OCI-LY7 (cell line): ENCODE measurements at regions of chr14 and their contacts with region 1.

Region 1: GRCh38 chr14:102524466-102525218 is 15.1 kb upstream of the ANKRD9 start:
- DNase-seq: peak; percentile 98
- H3K4me3 ChIP-seq: peak overlapping the region; percentile 67
- H3K27ac ChIP-seq: peak overlapping the region; percentile 47
- H3K4me1 ChIP-seq: peaks cover 18% of the 10 kb centered on the region
- CTCF ChIP-seq: peak; percentile 95

Region 2: GRCh38 chr14:102560458-102561154 is 36.0 kb after region 1 on chr14:
- CTCF ChIA-PET with region 1: interaction called, 3 read pairs
- POLR2A ChIA-PET with region 1: interaction called, 10 read pairs
- intact Hi-C with region 1: loop called (anchors 2 kb)
- DNase-seq: peak; percentile 73
- H3K4me3 ChIP-seq: peak overlapping the region; percentile 2
- H3K27ac ChIP-seq: peak overlapping the region; percentile 32
- H3K4me1 ChIP-seq: peaks cover 19% of the 10 kb centered on the region
- CTCF ChIP-seq: no peak

Region 3: GRCh38 chr14:102694530-102695166 is 170.0 kb after region 1 on chr14:
- CTCF ChIA-PET with region 1: no interaction called
- POLR2A ChIA-PET with region 1: interaction called, 3 read pairs
- intact Hi-C with region 1: loop called (anchors 1 kb)
- DNase-seq: peak; percentile 78
- H3K4me3 ChIP-seq: no peak overlapping the region
- H3K27ac ChIP-seq: no peak overlapping the region
- H3K4me1 ChIP-seq: peaks cover 4% of the 10 kb centered on the region
- CTCF ChIP-seq: peak; percentile 87

Region 4: GRCh38 chr14:102774391-102775153 is 249.9 kb after region 1 on chr14:
- CTCF ChIA-PET with region 1: no interaction called
- POLR2A ChIA-PET with region 1: no interaction called
- intact Hi-C with region 1: loop called (anchors 1 kb)
- DNase-seq: peak; percentile 67
- H3K4me3 ChIP-seq: no peak overlapping the region
- H3K27ac ChIP-seq: no peak overlapping the region
- H3K4me1 ChIP-seq: peaks cover 12% of the 10 kb centered on the region
- CTCF ChIP-seq: peak; percentile 84

Region 5: DNA sequence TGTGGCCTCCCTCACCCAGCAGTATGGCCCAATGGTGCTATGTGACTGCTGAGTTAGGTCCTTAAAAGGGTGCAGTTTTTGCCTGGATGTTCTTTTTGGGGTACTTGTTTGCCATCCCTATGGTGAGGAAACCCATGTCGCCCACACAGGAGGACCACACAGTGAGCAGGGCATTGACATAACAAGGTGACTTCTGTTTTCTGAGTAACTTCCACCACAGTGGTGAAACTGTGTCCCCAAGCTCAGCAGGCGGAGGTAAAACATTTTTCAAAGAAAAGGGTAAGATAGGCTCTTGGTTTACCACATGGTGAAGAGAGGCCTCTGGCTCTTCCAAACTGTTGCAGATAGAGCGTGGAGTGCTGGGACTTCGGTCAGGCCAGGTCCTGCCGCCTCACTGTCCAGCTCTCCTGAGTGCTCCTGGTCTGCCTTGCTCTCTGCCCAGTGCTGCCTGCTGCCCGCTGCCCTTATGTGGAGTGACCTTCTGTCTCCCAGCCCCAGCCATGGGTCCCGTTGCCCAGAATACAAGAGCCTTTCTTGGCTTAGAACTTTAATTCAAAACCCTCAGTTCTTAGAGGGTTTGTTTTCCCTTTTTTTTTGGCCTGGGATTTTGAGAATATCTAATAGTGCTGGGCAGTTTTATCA is 306.6 kb after region 1 on chr14:
- CTCF ChIA-PET with region 1: no interaction called
- POLR2A ChIA-PET with region 1: no interaction called
- intact Hi-C with region 1: no loop called
- DNase-seq: no peak
- H3K4me3 ChIP-seq: no peak overlapping the region
- H3K27ac ChIP-seq: no peak overlapping the region
- H3K4me1 ChIP-seq: no peaks in the 10 kb centered on the region
- CTCF ChIP-seq: no peak

Region 6: DNA sequence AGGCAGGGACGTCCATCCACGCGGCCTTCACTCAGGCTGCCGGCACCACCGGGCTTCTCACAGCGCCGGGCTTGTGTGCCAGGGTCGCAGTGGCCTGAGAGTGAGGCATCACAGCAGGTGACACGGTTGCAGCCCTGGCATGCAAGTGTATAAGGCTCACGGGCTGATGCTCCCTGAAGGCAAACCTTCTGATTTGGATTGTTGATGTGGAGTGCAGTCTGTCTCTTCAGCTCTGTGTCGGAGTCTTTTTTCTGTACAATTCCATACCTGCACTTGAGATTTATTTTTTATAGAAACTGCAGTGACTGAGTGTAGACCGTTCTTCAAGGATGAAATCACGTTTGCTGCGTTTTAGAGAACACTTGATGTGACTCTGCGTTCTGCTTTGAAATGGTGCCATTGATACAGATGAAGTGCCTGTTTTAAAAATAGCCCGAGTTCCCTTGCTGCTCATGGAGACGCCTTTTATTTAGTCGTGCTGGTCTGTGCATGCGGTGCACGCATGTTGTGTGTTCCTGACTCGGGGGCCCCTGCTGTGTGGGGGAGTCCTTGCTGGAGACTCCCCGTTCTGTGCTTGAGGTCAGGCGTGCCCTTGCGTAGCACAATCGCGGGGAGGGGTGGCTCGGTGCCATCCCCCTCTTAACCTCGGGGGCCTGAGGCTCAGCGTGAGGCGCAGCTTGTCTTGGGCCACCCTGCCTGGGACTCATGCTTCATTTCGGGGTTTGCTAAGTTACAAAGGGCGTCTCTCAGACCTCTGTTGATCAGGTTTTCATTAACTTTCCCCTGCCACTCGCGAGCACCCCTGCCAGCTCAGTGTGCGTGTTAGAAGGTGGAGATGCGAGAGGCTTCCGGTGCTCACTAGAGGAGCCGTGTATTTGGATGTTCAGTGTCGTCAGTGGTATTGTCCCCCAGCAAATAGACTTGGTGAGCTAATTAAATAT is 376.3 kb after region 1 on chr14:
- CTCF ChIA-PET with region 1: no interaction called
- POLR2A ChIA-PET with region 1: no interaction called
- intact Hi-C with region 1: loop called (anchors 5 kb)
- DNase-seq: peak; percentile 42
- H3K4me3 ChIP-seq: peak overlapping the region; percentile 36
- H3K27ac ChIP-seq: peak overlapping the region; percentile 59
- H3K4me1 ChIP-seq: peaks cover 28% of the 10 kb centered on the region
- CTCF ChIP-seq: no peak